ENCODE measurements at regions of chr11 and their contacts with region 1.

Region 1: DNA sequence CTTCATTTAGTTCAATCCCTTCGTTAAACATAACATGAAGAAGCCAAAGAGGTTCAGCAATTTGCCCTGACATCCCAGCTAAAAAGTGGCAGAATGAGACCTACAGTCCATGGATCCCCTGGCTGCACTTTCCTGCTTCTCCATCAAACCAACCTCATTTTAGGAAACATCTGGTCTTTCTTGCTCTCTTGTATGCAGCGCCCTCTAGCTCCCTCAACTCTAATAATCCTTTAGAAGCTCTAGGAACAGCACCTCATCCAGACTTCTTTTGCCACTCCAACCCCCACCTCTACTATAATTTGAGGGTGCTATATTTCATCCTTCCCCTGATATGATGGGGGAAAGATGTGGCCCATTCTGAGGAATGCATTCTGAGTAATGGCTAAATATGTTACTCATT is 7.4 kb downstream of the CNTF start:
- DNase-seq: peak; percentile 9
- H3K4me3 ChIP-seq: no peak overlapping the region
- CTCF ChIP-seq: peak; percentile 56

Region 2: DNA sequence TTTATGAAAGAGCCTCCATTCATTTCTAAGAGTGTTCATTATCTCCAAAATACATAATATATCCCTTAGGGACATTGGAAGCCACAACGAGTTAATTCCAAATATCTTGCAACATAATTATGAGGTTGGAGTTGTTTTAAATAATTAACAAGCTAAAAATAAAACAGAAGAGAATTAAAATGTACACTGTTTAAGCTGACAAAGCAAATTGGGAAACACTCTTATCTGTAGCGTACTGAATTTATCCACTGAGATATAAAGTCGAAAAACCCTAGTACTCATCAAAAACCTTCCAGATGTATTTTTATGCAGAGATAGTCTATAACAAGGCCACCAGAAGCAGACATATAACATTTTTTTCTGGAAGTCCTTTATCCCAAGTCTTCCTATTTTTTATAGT is 195.6 kb before region 1 on chr11:
- CTCF ChIA-PET with region 1: no interaction called
- POLR2A ChIA-PET with region 1: no interaction called
- DNase-seq: no peak
- H3K4me3 ChIP-seq: no peak overlapping the region
- CTCF ChIP-seq: no peak

Region 3: GRCh38 chr11:58524232-58525036 is 105.4 kb before region 1 on chr11:
- CTCF ChIA-PET with region 1: interaction called, 12 read pairs
- POLR2A ChIA-PET with region 1: no interaction called
- DNase-seq: peak; percentile 59
- H3K4me3 ChIP-seq: no peak overlapping the region
- CTCF ChIP-seq: peak; percentile 91

Region 4: GRCh38 chr11:58567889-58568512 is 61.9 kb before region 1 on chr11:
- CTCF ChIA-PET with region 1: interaction called, 58 read pairs
- POLR2A ChIA-PET with region 1: no interaction called
- DNase-seq: no peak
- H3K4me3 ChIP-seq: no peak overlapping the region
- CTCF ChIP-seq: peak; percentile 83

Region 5: GRCh38 chr11:58579192-58580129 is 50.4 kb before region 1 on chr11:
- CTCF ChIA-PET with region 1: interaction called, 44 read pairs
- POLR2A ChIA-PET with region 1: interaction called, 3 read pairs
- DNase-seq: no peak
- H3K4me3 ChIP-seq: peak overlapping the region; percentile 93
- CTCF ChIP-seq: peak; percentile 94

Region 6: DNA sequence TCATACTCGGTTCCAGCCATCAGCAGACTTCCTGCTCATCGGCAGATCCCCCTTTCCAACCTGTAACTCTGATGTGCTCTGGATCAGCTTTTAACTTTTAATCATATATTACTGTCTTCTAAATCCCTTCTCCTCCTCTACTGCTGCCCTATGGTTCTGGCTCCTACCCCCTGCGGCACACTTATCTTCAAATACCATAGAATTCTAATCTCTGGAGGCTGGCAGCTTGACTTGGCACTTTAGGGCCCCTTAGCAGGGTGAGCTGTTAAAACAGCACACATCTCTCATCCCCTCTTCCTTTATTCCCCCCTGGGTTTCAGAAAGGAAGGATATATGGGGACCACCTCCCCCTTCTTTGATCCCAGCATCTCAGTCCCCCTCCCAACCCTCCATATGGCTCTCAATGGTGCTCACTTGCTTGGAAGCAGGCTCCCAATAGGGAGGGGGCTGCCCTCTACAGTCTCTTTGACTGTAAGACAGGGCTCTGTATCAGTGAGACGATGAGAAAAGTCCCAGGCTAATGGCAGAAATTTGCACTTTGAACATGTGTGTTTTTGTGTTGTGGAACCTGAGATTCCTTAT is 11.8 kb before region 1 on chr11:
- CTCF ChIA-PET with region 1: interaction called, 30 read pairs
- POLR2A ChIA-PET with region 1: no interaction called
- DNase-seq: no peak
- H3K4me3 ChIP-seq: no peak overlapping the region
- CTCF ChIP-seq: no peak

Region 7: DNA sequence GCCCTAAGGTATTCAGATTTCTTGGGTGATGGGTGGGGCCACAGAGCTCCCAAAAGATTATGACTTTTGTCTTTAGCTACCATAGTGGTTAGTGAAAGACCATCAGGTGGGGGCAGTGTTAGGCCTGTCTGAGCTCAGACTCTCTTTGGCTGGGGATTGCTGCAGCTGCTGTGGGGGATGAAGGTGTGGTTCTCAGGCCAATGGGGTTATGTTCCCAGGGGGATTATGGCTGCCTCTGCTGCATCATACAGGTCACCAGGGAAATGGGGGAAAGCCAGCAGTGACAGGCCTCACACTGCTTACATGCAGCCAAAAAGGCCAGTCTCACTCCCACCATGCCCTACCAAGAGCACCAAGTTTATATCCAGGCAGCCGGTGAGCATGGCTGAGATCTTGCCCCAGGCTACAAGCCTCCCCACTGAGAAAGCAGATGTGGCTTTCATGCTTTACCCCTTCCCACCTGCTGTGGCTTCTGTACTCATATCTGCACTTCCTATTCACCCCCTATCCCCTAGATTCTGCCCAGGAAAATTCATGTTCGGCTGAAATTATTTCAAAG is 17.4 kb after region 1 on chr11:
- CTCF ChIA-PET with region 1: interaction called, 57 read pairs
- POLR2A ChIA-PET with region 1: no interaction called
- DNase-seq: no peak
- H3K4me3 ChIP-seq: no peak overlapping the region
- CTCF ChIP-seq: no peak

Region 8: DNA sequence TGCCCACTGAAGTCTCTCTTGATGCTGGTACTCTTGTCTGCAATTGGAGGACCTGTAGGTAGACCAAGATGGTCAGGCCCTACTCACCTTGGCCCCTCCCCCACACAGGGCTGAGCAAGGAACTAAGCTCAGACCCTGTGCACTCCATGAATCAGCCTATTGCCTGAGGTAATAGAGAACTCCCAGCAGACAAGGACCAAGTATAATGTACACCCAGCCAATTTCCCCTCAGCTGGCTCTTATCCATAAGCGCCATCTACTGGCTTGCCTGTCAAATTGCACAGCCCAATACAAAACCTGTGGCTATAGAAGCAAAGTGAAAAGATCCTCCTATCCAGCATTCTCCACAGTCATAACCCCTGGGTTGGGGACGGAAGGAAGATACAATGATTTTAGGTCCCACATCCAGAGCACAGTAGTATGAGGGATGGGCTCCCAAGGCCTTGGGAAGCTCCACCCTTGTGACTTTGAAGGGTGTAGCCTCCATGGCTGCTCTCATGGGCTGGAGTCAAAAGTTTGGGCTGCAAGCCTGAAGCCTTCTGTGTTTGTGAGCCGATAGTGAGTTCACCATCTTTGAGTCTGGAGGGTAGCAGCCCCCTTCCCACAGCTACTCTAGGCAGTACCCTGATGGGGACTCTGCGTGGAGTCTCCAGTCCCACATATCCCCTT is 158.6 kb after region 1 on chr11:
- CTCF ChIA-PET with region 1: interaction called, 11 read pairs
- POLR2A ChIA-PET with region 1: no interaction called
- DNase-seq: no peak
- H3K4me3 ChIP-seq: no peak overlapping the region
- CTCF ChIP-seq: peak; percentile 71

Region 9: GRCh38 chr11:58980159-58980843 is 350.4 kb after region 1 on chr11:
- CTCF ChIA-PET with region 1: no interaction called
- POLR2A ChIA-PET with region 1: no interaction called
- DNase-seq: no peak
- H3K4me3 ChIP-seq: no peak overlapping the region
- CTCF ChIP-seq: no peak

Measured in AG04449 (cell line).